Activated T-helper 1 cell treated with anti-CD3 and anti-CD28 coated beads, Interleukin-12 subunit alpha, Interleukin-12 subunit beta, Interleukin-2, Interleukin-4 antibody, amounts not matched to agents 30 ng/mL and 10 ng/mL and 1 ng/mL, durations not matched to agents 14 hours and 24 hours and 36 hours (primary cell): ENCODE measurements at regions of chr6 and their contacts with region 1.

Region 1: GRCh38 chr6:107459283-107460082 is at the start of gene PDSS2:
- DNase-seq: peak; percentile 95
- H3K4me3 Mint-ChIP-seq: peak within 1 kb of the TSS; percentile 93
- H3K27ac Mint-ChIP-seq: peak within 1 kb of the TSS; percentile 91
- H3K4me1 Mint-ChIP-seq: peaks cover 16% of the 10 kb centered on the region
- H3K27me3 Mint-ChIP-seq: no peaks in the 10 kb centered on the region
- total RNA-seq, gene PDSS2: 11.8 and 14.5 TPM in 2 replicates

Region 2: DNA sequence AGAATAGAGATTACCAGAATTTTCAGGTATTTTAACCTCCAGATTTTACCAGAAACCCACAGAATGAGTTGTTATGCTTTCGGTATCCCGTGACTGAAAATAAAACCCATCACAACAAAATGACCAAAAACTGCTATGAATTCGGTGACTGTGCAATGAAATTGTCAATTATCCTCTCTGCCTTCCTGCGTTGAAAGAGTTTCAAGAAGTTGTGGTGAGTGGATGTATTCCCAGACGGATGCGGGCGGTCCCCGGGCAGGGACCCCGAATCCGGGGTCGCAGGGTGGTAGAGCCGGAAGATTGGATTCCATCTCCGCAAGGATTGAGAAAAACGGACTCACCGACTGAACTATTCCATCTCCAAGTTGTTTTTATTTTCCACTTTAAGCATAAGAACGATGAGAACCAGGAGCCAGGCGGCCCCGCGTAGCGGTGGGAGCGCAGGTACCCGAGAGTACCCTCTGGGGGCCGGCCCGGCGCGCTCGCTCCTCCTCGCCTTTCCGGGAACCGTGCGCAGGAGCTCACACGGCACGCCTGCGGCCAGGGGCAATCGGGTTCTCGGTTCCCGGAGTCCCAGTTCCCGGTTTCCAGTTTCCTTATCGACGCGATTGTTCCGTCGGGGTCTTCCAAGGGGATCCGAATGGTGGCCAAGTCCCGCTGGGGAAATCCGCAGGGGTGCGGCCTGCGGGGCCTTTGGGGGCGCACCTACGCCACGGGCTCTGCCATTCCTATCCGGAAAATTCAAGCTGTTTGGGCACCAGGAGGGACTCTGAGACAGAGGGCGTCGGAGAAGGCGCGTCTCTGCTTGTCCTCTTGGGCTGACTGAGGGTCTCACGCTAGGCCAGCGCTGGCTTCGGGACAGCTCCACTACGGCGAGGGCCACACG is 1478.2 kb before region 1 on chr6:
- intact Hi-C with region 1: no loop called
- DNase-seq: peak; percentile 48
- H3K4me3 Mint-ChIP-seq: peak overlapping the region; percentile 84
- H3K27ac Mint-ChIP-seq: peak overlapping the region; percentile 91
- H3K4me1 Mint-ChIP-seq: peaks cover 79% of the 10 kb centered on the region
- H3K27me3 Mint-ChIP-seq: no peaks in the 10 kb centered on the region

Region 3: DNA sequence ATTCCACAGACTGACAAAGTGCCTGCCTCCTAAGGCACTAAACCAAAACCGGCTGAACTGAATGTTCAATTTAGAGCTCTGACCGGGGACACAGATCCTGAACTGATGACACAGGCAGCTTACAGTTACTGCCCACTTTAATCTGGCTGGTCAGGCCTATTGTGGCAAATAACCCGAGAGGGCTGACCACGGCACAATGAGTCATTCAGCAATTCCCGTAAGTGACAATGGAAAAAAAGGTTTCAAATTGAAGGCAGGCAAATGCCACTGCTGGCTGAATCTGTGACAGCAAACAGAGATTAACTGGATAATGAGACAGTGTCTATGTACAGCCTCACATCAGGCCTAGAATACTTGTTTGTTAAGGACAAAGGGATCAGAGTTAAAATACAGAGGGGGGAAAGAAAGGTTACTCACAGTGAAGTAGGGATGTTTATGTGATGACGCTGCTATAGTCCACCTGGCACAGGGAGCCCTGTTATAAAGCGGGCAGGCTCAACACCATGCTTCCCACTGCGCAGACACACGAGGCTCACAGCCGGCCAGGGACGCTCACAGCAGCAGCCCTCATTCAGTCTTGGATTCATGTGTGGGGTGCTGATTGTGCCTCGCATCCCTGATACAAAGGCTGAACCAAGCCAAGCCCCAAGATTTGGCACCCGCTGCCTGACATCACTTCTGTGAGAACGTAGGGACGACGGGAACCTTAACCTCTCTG is 884.6 kb before region 1 on chr6:
- intact Hi-C with region 1: no loop called
- DNase-seq: no peak
- H3K4me3 Mint-ChIP-seq: no peak overlapping the region
- H3K27ac Mint-ChIP-seq: no peak overlapping the region
- H3K4me1 Mint-ChIP-seq: peaks cover 12% of the 10 kb centered on the region
- H3K27me3 Mint-ChIP-seq: no peaks in the 10 kb centered on the region

Region 4: DNA sequence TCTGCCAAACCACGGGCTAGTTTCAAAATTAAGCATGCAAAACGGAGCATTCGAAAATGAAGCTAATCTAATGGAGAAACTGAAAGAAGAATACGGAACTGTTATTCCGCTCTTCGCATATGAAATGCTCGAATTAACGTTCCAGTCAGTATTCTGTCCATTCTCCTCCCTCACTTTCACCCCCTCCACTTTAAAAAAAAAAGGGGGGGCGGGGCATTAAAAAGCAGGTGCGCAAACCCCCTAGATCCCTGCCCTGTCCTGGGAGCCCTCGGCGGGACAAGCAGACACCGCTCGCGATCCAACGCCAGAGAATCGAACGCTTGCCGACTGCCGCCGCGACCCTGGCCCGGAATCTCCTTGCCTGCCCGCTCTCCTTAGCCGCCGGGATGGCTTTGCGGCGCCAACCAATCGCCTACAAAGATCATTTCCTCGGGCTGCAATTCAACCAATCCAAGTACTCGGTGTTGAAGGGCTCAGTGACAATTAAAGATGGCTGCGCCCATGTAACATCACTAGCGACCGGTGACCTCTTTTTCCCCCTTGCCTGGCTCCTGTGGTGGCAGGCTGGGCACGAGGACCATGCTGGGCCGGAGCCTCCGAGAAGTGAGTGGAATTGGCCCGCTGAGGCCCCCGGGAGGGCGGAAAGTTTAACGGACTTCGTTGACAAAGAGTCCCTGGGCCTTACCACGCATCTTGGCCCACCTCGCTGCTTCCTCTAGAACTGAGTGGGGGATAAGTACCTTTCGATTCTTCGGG is 830.2 kb before region 1 on chr6 and contains the starts of genes QRSL1 and RTN4IP1:
- intact Hi-C with region 1: loop called (anchors 10 kb)
- DNase-seq: peak; percentile 84
- H3K4me3 Mint-ChIP-seq: peak within 1 kb of the TSS; percentile 95
- H3K27ac Mint-ChIP-seq: peak within 1 kb of the TSS; percentile 98
- H3K4me1 Mint-ChIP-seq: peaks cover 33% of the 10 kb centered on the region
- H3K27me3 Mint-ChIP-seq: no peaks in the 10 kb centered on the region
- total RNA-seq, gene QRSL1: 18.6 and 21.9 TPM in 2 replicates
- total RNA-seq, gene RTN4IP1: 6.4 and 6.8 TPM in 2 replicates

Region 5: DNA sequence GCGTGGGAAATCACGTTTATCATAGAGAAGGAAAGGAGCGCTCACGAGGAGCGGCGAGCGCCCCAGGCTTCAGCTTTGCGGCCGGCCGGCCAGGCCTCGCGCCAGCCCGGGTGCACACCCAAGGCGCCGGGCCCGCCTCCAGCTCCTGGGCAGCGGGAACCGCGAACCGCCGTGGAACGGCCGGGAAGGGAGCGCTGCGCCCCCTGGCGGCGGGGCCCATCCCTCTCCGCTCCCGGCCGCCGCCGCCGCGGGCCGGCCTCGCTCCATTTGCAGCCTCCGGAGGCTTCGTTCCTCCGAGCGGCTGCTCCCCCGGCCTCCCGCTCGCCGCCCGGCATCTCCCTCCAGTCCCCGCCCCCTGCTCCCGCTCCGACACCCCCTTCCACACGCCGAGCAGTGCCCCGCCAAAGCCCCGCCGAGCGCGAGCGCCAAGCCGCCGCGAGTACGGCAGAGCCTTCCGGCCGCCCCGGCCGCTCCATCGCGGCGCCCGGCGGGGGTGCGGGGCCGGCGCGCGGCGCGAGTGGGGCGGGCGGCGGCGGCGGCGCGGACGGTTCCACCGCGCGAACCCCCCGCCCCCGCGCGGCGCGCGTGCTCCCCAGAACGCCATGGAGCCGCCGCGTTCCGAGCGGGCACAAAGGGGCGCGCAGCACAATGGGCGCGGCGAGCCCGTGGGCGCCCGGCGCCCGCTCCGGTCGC is 345.1 kb before region 1 on chr6:
- intact Hi-C with region 1: loop called (anchors 1 kb)
- DNase-seq: peak; percentile 70
- H3K4me3 Mint-ChIP-seq: peak overlapping the region; percentile 82
- H3K27ac Mint-ChIP-seq: peak overlapping the region; percentile 77
- H3K4me1 Mint-ChIP-seq: peaks cover 26% of the 10 kb centered on the region
- H3K27me3 Mint-ChIP-seq: peaks cover 18% of the 10 kb centered on the region

Region 6: GRCh38 chr6:107330168-107330567 is 129.3 kb before region 1 on chr6:
- intact Hi-C with region 1: loop called (anchors 2 kb)
- DNase-seq: no peak
- H3K4me3 Mint-ChIP-seq: peak overlapping the region; percentile 3
- H3K27ac Mint-ChIP-seq: no peak overlapping the region
- H3K4me1 Mint-ChIP-seq: peaks cover 15% of the 10 kb centered on the region
- H3K27me3 Mint-ChIP-seq: no peaks in the 10 kb centered on the region

Region 7: GRCh38 chr6:107418118-107418517 is 41.4 kb before region 1 on chr6:
- intact Hi-C with region 1: no loop called
- DNase-seq: no peak
- H3K4me3 Mint-ChIP-seq: no peak overlapping the region
- H3K27ac Mint-ChIP-seq: no peak overlapping the region
- H3K4me1 Mint-ChIP-seq: no peaks in the 10 kb centered on the region
- H3K27me3 Mint-ChIP-seq: no peaks in the 10 kb centered on the region

Region 8: GRCh38 chr6:107657755-107658461 is 198.4 kb after region 1 on chr6:
- intact Hi-C with region 1: loop called (anchors 5 kb)
- DNase-seq: peak; percentile 54
- H3K4me3 Mint-ChIP-seq: peak overlapping the region; percentile 48
- H3K27ac Mint-ChIP-seq: no peak overlapping the region
- H3K4me1 Mint-ChIP-seq: peaks cover 35% of the 10 kb centered on the region
- H3K27me3 Mint-ChIP-seq: peaks cover 14% of the 10 kb centered on the region